ENCODE measurements at regions of chr15 and their contacts with region 1.

Region 1: DNA sequence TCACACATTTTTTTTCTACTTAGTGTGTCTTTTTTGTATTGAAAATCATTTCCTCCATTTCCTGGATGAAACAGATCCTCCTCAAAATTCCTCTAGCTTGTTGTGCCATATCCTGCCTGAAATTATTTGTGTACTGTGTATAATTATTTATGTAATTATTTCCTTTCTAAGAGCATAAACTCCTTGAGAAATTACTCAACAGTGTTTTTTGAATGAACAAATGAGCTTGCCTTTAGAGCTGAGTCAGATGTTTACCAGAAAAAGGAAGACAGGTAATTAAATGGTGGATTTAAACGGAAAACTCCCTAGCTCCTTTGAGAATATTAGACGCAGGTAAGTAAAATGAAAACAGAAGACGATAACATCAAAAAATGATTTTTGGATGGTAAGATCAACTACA is 13.2 kb upstream of the SECISBP2L start:
- DNase-seq: no peak
- ATAC-seq: no peak

Region 2: GRCh38 chr15:49023354-49023753 is 36.1 kb before region 1 on chr15:
- intact Hi-C with region 1: no loop called
- DNase-seq: no peak
- ATAC-seq: no peak

Region 3: GRCh38 chr15:49122541-49123062 is 63.1 kb after region 1 on chr15:
- intact Hi-C with region 1: loop called (anchors 10 kb)
- DNase-seq: no peak
- ATAC-seq: no peak

Measured in Right ventricle myocardium superior (tissue), 1 donor.